SK-N-SH (cell line): ENCODE measurements at regions of chr16 and their contacts with region 1.

Region 1: DNA sequence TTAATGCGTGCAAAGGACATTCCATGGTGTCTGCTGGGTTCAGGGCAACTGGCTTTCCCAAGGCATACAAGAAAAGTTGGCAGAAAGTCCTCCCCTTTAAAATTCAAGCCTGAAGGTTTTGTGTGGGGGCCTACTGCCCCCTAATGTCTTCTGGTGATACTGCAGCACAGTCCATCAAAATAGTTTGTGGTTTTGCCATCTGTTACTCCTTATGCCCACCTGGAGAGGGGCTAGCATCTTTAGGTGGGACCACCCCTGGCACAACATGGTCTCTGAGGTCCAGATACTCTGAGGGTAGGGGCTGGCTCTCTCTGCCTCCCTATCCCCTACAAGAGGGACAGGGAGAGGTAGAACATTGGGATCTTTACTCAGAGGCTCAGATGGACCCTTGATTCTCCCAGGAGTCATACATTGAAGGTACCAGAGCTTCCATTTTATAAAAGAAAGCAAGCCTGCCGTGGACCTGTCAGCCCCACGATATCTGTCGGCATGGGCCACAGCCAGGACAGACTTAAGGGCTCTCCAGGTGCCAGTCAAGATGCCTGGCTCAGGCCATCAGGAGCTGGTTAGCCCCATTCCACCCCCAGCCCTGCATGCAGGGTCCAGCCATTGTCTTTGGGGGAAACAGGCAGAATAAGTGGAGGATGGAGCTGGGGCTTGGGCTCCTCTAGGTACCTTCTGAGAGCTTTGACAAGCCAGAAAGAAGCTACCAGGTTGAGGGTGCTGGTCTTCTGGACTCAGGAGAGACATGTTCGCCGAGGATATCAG is 6.3 kb downstream of the ESRP2 start:
- DNase-seq: peak; percentile 69
- H3K4me3 ChIP-seq: peak overlapping the region in 1 of 2 experiments; percentile 27; a peak in 1 of 4 replicates
- H3K27ac ChIP-seq: no peak overlapping the region
- H3K4me1 ChIP-seq: peaks cover 0 to 25% of the 10 kb centered on the region in 2 experiments; a peak in 2 of 4 replicates
- H3K27me3 ChIP-seq: no peaks in the 10 kb centered on the region
- CTCF ChIP-seq: peak; percentile 91
- EP300 ChIP-seq: no peak
- RAD21 ChIP-seq: peak; percentile 94

Region 2: GRCh38 chr16:67598527-67598926 is 631.1 kb before region 1 on chr16:
- CTCF ChIA-PET with region 1: no interaction called
- POLR2A ChIA-PET with region 1: no interaction called
- DNase-seq: no peak
- H3K4me3 ChIP-seq: no peak overlapping the region
- H3K27ac ChIP-seq: no peak overlapping the region
- H3K4me1 ChIP-seq: no peaks in the 10 kb centered on the region; a peak in 1 of 4 replicates
- H3K27me3 ChIP-seq: no peaks in the 10 kb centered on the region
- CTCF ChIP-seq: no peak
- EP300 ChIP-seq: no peak
- RAD21 ChIP-seq: no peak

Region 3: GRCh38 chr16:67993189-67994039 is 236.2 kb before region 1 on chr16:
- CTCF ChIA-PET with region 1: interaction called, 25 read pairs
- POLR2A ChIA-PET with region 1: interaction called, 3 read pairs
- DNase-seq: peak; percentile 96
- H3K4me3 ChIP-seq: peak overlapping the region in 1 of 2 experiments; percentile 56; a peak in 2 of 4 replicates
- H3K27ac ChIP-seq: no peak overlapping the region
- H3K4me1 ChIP-seq: peaks cover 0 to 7% of the 10 kb centered on the region in 2 experiments; a peak in 1 of 4 replicates
- H3K27me3 ChIP-seq: no peaks in the 10 kb centered on the region
- CTCF ChIP-seq: peak; percentile 81
- EP300 ChIP-seq: no peak
- RAD21 ChIP-seq: peak; percentile 63

Region 4: GRCh38 chr16:68085259-68086071 is 144.2 kb before region 1 on chr16 and contains the start of gene NFATC3:
- CTCF ChIA-PET with region 1: interaction called, 98 read pairs
- POLR2A ChIA-PET with region 1: interaction called, 10 read pairs
- DNase-seq: peak; percentile 97
- H3K4me3 ChIP-seq: peak within 1 kb of the TSS; percentile 78 to 97
- H3K27ac ChIP-seq: peak within 1 kb of the TSS; percentile 83 to 99
- H3K4me1 ChIP-seq: peaks cover 11 to 14% of the 10 kb centered on the region in 2 experiments; a peak in 3 of 4 replicates
- H3K27me3 ChIP-seq: no peaks in the 10 kb centered on the region
- CTCF ChIP-seq: no peak
- EP300 ChIP-seq: peak in 1 of 2 experiments; percentile 39; a peak in 1 of 4 replicates
- RAD21 ChIP-seq: no peak
- polyA plus RNA-seq, gene NFATC3: 5.7 and 7.8 TPM in 2 replicates

Region 5: DNA sequence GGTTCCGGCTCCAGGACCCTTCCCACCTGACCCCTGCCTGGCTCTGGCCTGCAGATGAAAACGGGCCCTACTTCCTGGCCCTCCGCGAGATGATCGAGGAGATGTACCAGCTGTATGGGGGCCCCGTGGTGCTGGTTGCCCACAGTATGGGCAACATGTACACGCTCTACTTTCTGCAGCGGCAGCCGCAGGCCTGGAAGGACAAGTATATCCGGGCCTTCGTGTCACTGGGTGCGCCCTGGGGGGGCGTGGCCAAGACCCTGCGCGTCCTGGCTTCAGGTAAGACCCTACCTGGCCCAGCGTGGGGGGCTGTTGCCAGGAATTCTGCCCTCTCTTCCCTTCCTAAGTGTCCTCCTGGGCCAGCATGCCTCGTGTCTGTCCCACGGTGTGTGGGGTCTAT is 26.1 kb after region 1 on chr16:
- CTCF ChIA-PET with region 1: no interaction called
- POLR2A ChIA-PET with region 1: no interaction called
- DNase-seq: no peak
- H3K4me3 ChIP-seq: no peak overlapping the region
- H3K27ac ChIP-seq: no peak overlapping the region
- H3K4me1 ChIP-seq: peaks cover 0 to 6% of the 10 kb centered on the region in 2 experiments; a peak in 2 of 4 replicates
- H3K27me3 ChIP-seq: no peaks in the 10 kb centered on the region
- CTCF ChIP-seq: no peak
- EP300 ChIP-seq: no peak
- RAD21 ChIP-seq: no peak

Region 6: GRCh38 chr16:68284847-68285246 is 55.2 kb after region 1 on chr16:
- CTCF ChIA-PET with region 1: no interaction called
- POLR2A ChIA-PET with region 1: no interaction called
- DNase-seq: no peak
- H3K4me3 ChIP-seq: no peak overlapping the region
- H3K27ac ChIP-seq: no peak overlapping the region
- H3K4me1 ChIP-seq: no peaks in the 10 kb centered on the region
- H3K27me3 ChIP-seq: no peaks in the 10 kb centered on the region
- CTCF ChIP-seq: no peak
- EP300 ChIP-seq: no peak
- RAD21 ChIP-seq: no peak

Region 7: GRCh38 chr16:68382296-68382718 is 152.7 kb after region 1 on chr16:
- CTCF ChIA-PET with region 1: no interaction called
- POLR2A ChIA-PET with region 1: no interaction called
- DNase-seq: peak; percentile 59
- H3K4me3 ChIP-seq: no peak overlapping the region
- H3K27ac ChIP-seq: no peak overlapping the region
- H3K4me1 ChIP-seq: peaks cover 0 to 13% of the 10 kb centered on the region in 2 experiments; a peak in 1 of 4 replicates
- H3K27me3 ChIP-seq: peaks cover 8% of the 10 kb centered on the region; the same call in 1 of the 2 replicates
- CTCF ChIP-seq: peak; percentile 40
- EP300 ChIP-seq: no peak
- RAD21 ChIP-seq: no peak